Activated CD8-positive, alpha-beta T cell treated with anti-CD3 and anti-CD28 coated beads, Interleukin-2, amount 10 ng/mL, durations not matched to agents 7 days and 5 days (primary cell): ENCODE measurements at regions of chr12 and their contacts with region 1.

Region 1: DNA sequence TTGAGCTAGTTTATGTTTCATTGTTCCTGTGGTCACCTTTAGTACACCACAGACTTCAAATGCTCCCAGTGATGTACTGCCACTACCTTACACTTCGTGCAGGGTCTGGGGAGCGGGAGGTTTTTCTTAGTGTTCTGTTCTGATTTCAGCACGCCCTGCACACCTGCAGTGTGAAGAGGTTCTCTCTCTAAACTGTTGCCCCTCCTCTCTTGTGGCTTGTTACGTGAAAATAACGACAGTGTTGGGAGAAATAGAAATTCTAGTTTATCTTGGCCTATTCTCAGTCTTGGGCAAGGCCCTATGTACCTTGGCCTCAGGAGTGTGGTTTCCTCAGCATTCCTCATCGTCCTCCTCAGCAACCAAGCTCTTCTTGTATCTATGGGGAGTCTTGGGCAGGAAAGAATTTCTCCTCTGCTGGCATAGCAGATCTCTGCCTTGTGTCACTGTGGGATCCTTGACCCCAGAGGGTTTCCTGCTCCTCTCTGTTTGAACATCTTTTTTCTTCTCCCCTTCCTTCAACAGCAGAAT is 48.6 kb downstream of the EIF2S3B start:
- DNase-seq: peak; percentile 77
- ATAC-seq: peak; percentile 58
- H3K4me3 Mint-ChIP-seq: peak overlapping the region; percentile 90
- H3K27ac Mint-ChIP-seq: peak overlapping the region; percentile 92
- H3K4me1 Mint-ChIP-seq: peaks cover 49% of the 10 kb centered on the region
- H3K27me3 Mint-ChIP-seq: no peaks in the 10 kb centered on the region

Region 2: DNA sequence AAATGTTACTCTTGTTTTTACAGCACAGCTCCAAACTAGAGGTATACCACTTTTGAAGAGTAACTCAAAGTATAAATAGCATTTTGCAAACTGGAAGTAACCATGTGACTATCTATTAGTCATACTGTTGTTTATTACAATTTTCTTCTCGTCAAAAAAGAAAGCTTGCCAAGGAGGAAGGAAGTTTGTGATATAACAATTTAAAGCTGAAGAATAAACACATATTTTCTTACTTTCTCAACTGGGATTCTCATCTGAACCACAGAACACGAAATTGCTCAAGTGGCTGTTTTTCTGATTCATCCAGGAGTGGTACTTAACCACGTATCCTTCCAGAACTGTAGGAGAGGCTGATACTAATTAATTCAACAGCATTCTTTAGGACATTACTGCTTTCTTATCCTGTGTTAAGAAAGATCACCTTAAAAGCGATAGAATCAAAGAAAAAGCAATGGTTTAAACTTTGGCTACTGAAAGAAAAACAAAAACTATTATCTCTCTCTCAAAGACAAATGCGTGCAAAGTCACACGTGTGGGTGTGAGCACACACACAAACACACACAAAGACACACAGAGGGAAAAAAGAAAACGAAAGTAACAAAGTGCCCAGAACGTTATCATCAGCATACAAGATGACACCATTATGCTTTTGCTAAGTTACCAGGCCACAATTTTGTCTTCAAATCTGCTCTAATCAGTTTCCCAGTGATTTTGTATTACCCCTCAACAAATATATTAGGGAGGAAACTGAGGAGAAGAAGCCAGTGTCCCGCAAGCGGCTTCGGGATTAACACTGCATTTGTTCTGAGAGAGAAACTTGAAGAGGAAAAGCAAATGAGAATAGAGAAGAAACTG is 684.8 kb before region 1 on chr12 and contains the start of gene CLEC2B:
- CTCF ChIA-PET with region 1: no interaction called
- POLR2A ChIA-PET with region 1: interaction called, 33 read pairs
- DNase-seq: peak; percentile 58
- ATAC-seq: peak; percentile 55
- H3K4me3 Mint-ChIP-seq: peak within 1 kb of the TSS; percentile 79
- H3K27ac Mint-ChIP-seq: peak within 1 kb of the TSS; percentile 91
- H3K4me1 Mint-ChIP-seq: peaks cover 22% of the 10 kb centered on the region
- H3K27me3 Mint-ChIP-seq: no peaks in the 10 kb centered on the region
- total RNA-seq, gene CLEC2B: 55.2 to 58.8 TPM

Region 3: DNA sequence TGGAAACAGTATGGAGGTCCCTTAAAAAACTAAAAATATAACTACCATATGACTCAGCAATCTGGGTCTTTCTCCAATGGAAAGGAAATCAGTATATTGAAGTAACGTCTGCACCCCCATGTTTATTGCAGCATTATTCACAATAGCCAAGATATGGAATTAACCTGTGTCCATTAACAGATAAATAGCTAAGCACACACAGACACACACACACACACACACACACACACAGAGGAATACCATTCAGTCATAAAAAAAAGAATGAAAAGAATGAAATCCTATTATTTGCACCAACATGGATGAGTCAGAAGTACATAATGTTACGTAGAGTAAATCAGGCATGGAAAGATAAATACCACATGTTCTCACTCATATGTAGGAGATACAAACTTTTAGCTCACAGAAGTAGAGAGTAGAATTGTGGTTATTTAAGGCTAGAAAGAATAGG is 169.1 kb before region 1 on chr12:
- CTCF ChIA-PET with region 1: interaction called, 5 read pairs
- POLR2A ChIA-PET with region 1: interaction called, 140 read pairs
- DNase-seq: no peak
- ATAC-seq: peak; percentile 35
- H3K4me3 Mint-ChIP-seq: peak overlapping the region; percentile 70
- H3K27ac Mint-ChIP-seq: peak overlapping the region; percentile 83
- H3K4me1 Mint-ChIP-seq: peaks cover 57% of the 10 kb centered on the region
- H3K27me3 Mint-ChIP-seq: no peaks in the 10 kb centered on the region

Region 4: DNA sequence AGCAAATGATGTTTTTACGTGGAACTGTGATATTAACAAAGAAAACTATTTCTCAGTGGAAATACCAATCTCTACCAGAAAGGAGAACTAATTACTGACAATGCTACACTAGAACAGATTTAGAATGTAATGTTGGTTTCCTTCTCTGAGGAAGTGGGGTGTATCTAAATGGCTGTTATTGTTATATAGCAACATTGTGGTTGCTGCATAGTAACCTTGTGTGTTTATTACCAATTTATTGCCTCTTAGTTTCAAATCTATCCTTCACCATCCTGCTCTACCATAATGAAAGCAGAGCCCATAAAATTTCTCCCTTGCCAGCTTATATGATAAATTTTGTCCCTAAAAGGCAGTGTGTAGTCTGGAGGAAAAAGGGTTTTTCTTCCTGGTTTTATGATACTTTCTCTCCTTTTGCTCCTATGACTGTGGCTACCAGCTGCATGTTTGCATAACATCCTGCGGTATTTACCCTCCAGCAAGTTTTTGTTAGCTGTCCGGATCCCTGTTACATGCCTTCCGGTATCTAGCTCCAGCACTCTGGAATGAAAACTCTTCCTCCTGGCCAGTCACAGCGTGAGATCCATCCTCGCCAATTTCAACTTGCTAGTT is 158.8 kb before region 1 on chr12:
- CTCF ChIA-PET with region 1: interaction called, 5 read pairs
- POLR2A ChIA-PET with region 1: interaction called, 85 read pairs
- DNase-seq: no peak
- ATAC-seq: peak; percentile 71
- H3K4me3 Mint-ChIP-seq: peak overlapping the region; percentile 57
- H3K27ac Mint-ChIP-seq: peak overlapping the region; percentile 81
- H3K4me1 Mint-ChIP-seq: peaks cover 67% of the 10 kb centered on the region
- H3K27me3 Mint-ChIP-seq: no peaks in the 10 kb centered on the region

Region 5: GRCh38 chr12:10409387-10409786 is 144.9 kb before region 1 on chr12 and contains the start of gene KLRC4:
- CTCF ChIA-PET with region 1: interaction called, 3 read pairs
- POLR2A ChIA-PET with region 1: interaction called, 14 read pairs
- DNase-seq: peak; percentile 49
- ATAC-seq: peak; percentile 63
- H3K4me3 Mint-ChIP-seq: peak within 1 kb of the TSS; percentile 77
- H3K27ac Mint-ChIP-seq: peak within 1 kb of the TSS; percentile 86
- H3K4me1 Mint-ChIP-seq: peaks cover 27% of the 10 kb centered on the region
- H3K27me3 Mint-ChIP-seq: no peaks in the 10 kb centered on the region
- total RNA-seq, gene KLRC4: 3.6 to 4.9 TPM

Region 6: GRCh38 chr12:10501031-10501430 is 53.3 kb before region 1 on chr12:
- CTCF ChIA-PET with region 1: interaction called, 9 read pairs
- POLR2A ChIA-PET with region 1: interaction called, 15 read pairs
- DNase-seq: no peak
- ATAC-seq: no peak
- H3K4me3 Mint-ChIP-seq: peak overlapping the region; percentile 37
- H3K27ac Mint-ChIP-seq: peak overlapping the region; percentile 49
- H3K4me1 Mint-ChIP-seq: peaks cover 48% of the 10 kb centered on the region
- H3K27me3 Mint-ChIP-seq: no peaks in the 10 kb centered on the region